Mammary epithelial cell (primary cell): ENCODE measurements at regions of chr2 and their contacts with region 1.

Region 1: DNA sequence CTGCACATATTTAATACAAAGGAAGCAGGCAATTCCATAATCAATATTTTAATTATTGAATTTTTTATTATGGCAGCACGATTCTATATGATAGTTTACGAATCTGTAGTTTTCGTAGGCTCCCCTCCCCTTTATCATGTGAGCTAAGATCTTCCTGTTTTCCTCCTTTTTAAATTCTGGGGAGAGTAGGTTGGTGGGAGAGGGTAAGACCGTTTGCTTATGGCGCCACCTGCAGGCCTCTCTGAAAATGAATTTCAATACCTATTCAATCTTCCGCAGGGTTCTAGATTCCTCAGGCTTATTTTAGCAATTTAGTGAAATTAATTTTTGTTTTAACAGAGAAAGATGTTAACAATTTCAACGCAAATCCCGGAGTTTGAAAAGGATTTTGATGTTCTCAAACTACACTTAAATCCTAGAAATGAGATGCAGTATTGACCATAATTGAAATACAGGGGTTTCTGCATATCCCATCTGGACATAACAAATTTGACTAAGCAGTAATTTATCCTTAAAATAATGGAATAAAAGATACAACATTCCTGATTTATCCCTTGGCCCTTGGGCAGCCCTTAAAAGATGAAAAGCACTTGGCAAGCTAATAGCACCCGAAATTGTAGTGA is 12.8 kb upstream of the GBX2 start:
- DNase-seq: no peak
- H3K4me3 ChIP-seq: no peak overlapping the region
- H3K27ac ChIP-seq: no peak overlapping the region
- H3K4me1 ChIP-seq: peaks cover 21% of the 10 kb centered on the region
- H3K27me3 ChIP-seq: no peaks in the 10 kb centered on the region
- CTCF ChIP-seq: peak; percentile 59 to 70

Region 2: GRCh38 chr2:235766278-235766677 is 414.7 kb before region 1 on chr2:
- CTCF ChIA-PET with region 1: no interaction called
- dilution Hi-C with region 1: no loop called
- in situ Hi-C with region 1: no loop called
- intact Hi-C with region 1: loop called (anchors 1 kb)
- DNase-seq: peak; percentile 60
- H3K4me3 ChIP-seq: no peak overlapping the region
- H3K27ac ChIP-seq: peak overlapping the region; percentile 59
- H3K4me1 ChIP-seq: peaks cover 13% of the 10 kb centered on the region
- H3K27me3 ChIP-seq: no peaks in the 10 kb centered on the region
- CTCF ChIP-seq: peak; percentile 85 to 90

Region 3: DNA sequence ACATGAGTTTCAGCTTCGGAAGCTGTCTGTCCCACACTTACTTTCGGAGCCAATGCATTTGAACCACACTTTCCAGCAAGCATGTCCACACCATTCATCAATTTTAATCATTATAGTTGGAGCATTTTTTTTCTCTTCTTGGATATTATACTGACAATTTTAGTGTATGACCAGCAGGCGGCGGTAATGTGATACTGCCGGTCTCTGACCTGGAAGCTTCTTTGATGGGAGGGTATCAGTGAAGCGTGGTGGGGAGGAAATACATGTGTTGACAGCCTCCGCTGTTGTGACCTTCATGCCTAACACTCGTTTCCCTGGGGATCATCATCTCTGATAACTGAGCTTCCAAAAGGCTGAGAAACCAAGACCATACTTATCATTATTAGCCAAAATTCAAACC is 244.4 kb before region 1 on chr2:
- CTCF ChIA-PET with region 1: no interaction called
- dilution Hi-C with region 1: no loop called
- in situ Hi-C with region 1: no loop called
- intact Hi-C with region 1: loop called (anchors 10 kb)
- DNase-seq: no peak
- H3K4me3 ChIP-seq: no peak overlapping the region
- H3K27ac ChIP-seq: no peak overlapping the region
- H3K4me1 ChIP-seq: no peaks in the 10 kb centered on the region
- H3K27me3 ChIP-seq: no peaks in the 10 kb centered on the region
- CTCF ChIP-seq: peak; percentile 24

Region 4: DNA sequence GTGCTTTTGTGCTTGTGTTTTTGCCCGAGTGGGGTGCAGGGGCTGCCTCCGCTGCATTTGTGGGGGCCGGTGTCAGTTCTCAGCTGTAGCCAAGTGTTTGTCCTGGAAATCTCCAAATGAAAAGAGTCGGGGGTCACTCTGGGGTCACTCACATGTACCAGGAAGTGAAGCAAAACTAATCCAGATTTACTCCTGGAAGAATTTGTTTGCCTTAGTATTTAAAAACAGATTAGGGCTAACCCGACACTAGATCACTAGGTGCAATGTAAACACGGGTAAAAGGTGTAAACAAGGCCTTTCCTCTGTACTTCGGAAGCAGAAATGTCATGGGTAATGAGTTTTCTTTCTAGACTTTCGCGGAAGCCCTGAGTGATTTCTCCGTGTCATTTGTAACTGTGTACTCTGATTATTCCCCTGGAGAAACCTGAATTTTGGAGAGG is 63.1 kb before region 1 on chr2:
- CTCF ChIA-PET with region 1: no interaction called
- dilution Hi-C with region 1: loop called (anchors 10 kb)
- in situ Hi-C with region 1: no loop called
- intact Hi-C with region 1: no loop called
- DNase-seq: no peak
- H3K4me3 ChIP-seq: no peak overlapping the region
- H3K27ac ChIP-seq: no peak overlapping the region
- H3K4me1 ChIP-seq: no peaks in the 10 kb centered on the region
- H3K27me3 ChIP-seq: no peaks in the 10 kb centered on the region
- CTCF ChIP-seq: no peak

Region 5: GRCh38 chr2:236642584-236643291 is 461.8 kb after region 1 on chr2:
- CTCF ChIA-PET with region 1: no interaction called
- dilution Hi-C with region 1: no loop called
- in situ Hi-C with region 1: no loop called
- intact Hi-C with region 1: no loop called
- DNase-seq: peak; percentile 85
- H3K4me3 ChIP-seq: no peak overlapping the region
- H3K27ac ChIP-seq: no peak overlapping the region
- H3K4me1 ChIP-seq: no peaks in the 10 kb centered on the region
- H3K27me3 ChIP-seq: no peaks in the 10 kb centered on the region
- CTCF ChIP-seq: no peak